Activated T-helper 1 cell treated with anti-CD3 and anti-CD28 coated beads, Interleukin-12 subunit alpha, Interleukin-12 subunit beta, Interleukin-2, Interleukin-4 antibody, amounts not matched to agents 30 ng/mL and 10 ng/mL and 1 ng/mL, durations not matched to agents 14 hours and 24 hours and 36 hours (primary cell): ENCODE measurements at regions of chr12 and their contacts with region 1.

Region 1: DNA sequence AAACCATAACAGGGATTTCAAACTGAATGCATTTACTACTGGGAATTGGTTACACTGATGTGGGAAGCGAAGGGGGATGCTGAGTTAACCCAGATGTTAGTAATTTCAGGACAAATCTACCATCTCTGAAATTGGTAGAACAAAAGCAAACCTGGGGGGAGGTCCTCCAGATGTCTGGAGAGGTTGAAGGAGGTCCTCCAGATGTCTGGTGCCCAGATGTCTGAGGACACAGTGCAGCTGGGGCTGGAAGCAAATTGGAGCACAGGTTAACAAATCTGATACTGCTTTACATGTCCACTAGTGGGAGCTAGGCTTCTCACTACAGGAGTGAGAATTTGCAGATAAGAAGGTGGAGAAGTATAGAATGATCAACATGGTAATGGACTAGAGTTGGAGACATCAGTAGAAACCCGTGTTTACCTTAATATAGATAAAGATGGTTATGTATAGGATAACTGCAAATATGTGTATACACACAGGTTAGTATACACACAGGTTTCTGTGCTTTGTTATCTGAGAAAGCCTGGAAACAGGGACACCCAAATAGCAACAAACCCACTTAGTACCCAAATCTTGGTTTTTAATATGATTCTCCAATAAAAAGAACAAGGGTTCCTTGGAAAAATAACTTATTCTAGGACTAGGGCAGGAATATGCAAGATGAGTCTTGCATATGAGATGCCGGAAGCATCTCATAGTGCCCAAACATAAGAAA is 162.5 kb downstream of the C12orf50 start:
- DNase-seq: no peak
- H3K4me3 Mint-ChIP-seq: no peak overlapping the region
- H3K27ac Mint-ChIP-seq: no peak overlapping the region
- H3K4me1 Mint-ChIP-seq: no peaks in the 10 kb centered on the region
- H3K27me3 Mint-ChIP-seq: no peaks in the 10 kb centered on the region

Region 2: GRCh38 chr12:87813476-87814234 is 53.1 kb before region 1 on chr12:
- intact Hi-C with region 1: no loop called
- DNase-seq: no peak
- H3K4me3 Mint-ChIP-seq: no peak overlapping the region
- H3K27ac Mint-ChIP-seq: no peak overlapping the region
- H3K4me1 Mint-ChIP-seq: no peaks in the 10 kb centered on the region
- H3K27me3 Mint-ChIP-seq: no peaks in the 10 kb centered on the region

Region 3: DNA sequence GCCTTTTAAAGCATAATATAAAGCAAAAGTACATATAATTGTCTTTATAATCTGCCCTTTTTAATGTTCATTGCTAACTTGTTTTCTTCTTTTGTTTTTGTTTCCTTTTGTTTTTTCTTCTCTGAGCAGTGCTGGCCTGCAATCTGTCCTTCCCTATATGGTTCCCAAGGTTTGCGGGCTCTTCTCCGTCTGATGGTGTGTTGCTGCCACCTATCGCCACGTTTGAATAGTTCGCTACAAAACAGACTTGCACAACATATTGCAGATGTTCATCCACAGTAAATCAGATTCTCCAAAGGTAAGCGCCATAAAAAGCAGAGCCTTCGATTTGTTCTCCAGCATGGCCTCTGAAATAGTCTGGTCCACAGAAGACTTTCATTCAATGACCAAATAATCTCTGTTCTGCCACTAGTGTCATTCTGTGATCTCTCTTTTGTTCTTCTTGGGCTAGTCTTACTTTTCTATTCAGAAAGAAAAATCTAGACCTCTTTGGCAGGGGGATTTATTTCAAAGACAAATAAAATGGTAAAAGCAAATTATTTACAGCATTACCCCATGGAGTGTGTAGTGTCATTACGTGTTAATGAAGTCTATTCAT is 128.9 kb after region 1 on chr12:
- intact Hi-C with region 1: loop called (anchors 1 kb)
- DNase-seq: no peak
- H3K4me3 Mint-ChIP-seq: no peak overlapping the region
- H3K27ac Mint-ChIP-seq: no peak overlapping the region
- H3K4me1 Mint-ChIP-seq: no peaks in the 10 kb centered on the region
- H3K27me3 Mint-ChIP-seq: no peaks in the 10 kb centered on the region